ENCODE measurements at regions of chr19 and their contacts with region 1.

Region 1: DNA sequence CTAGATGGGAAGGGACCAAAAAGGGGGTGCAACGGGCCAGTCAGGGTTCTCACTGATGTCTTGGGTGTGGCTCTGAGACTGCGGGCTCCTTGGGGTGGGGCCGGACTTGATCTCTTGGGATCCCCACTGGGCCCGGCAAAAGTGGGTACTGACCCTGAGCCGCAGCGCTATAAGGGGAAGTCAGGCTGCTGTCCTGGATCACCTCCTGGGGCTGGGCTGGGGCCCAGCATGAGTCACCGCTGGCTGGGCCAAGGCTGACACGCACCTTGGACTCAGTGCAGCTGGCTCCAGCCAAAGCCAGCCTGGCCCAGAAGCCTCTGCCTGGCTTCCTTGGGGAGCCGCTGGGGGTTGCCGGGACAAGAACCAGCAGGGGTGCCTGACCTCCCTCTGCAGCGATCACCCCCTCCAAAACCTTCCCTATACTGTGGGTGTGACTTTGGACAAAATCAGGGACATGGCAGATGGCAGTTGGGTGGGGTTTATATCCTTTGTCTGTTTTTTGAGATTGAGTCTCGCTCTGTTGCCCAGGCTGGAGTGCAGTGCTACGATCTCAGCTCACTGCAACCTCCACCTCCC is 617 bp upstream of the IQCN start:
- DNase-seq: peak; percentile 92
- ATAC-seq: peak; percentile 85

Region 2: DNA sequence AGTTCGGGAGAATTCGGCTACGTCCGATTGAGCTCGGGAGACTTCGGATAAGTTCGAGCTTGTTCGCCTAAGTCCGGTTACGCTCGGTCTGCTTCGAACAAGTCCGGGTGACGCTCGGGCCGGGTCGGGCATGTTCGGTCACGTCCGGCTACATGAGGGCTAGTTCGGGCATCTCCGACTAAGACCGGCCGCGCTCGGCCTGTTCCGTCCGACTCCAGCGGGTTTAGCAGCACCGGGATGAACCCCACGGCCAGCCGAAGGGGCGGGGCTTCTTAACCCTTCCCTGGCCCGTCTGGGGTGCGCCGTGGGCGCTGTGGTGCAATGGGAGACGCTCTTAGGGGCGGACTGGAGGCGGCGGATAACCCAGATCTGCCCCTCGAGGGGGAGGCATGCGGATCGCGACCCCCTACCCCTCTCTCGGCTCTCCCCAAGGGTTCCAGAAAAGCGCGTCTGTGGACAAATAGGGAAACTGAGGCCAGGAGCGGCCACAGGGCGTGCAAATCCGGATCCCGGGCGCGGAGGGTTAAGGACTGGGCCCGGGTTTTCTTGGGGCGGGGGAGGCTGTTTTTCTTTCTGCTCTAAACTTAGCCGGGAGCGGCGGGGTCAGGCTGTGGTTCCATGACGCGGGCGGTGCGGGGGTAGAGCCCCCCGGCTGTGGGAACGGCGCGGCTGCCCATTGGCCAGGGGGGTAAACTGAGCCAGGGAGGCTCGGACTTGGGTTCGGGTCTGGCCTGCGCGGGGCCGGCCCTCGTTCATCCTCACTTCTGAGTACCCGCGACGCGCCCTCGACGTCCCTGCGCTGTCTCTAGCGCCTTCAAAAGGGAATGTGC is 50.1 kb before region 1 on chr19:
- intact Hi-C with region 1: no loop called
- DNase-seq: peak; percentile 98
- ATAC-seq: peak; percentile 98

Region 3: DNA sequence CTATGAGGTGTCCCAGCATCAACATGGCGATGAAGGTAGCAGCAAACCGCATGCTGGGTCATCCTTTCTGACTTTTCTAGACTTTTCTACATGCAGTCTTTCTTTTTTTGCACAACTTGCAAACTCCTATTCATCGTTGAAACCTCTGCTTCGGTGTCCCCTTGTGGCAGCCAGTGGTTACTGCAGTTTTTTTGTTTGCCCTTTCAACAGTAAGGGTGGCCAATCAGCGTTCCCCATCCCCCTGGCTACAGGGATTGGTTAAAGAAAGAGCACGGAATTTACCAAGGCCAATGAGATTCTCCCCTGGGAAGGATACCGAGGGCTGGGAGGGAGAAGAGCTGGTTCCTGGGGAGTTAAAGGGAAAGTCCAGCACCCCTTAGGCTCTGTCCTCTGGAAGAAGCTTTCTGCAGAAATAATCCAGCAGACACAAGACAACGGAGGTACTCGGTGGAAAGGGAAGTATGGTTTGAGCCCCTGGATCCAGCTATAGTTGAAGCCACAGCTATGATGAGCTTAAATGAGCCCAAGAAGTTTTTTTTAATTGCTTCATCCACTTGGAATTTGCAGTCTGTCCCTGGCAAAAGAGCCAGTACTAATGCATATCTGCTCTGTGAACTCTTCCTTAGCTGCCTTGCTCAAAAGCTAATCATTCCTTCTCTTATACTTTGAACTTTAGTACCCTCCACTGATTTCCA is 53.6 kb after region 1 on chr19:
- intact Hi-C with region 1: loop called (anchors 1 kb)
- DNase-seq: peak; percentile 88
- ATAC-seq: peak; percentile 98

Region 4: DNA sequence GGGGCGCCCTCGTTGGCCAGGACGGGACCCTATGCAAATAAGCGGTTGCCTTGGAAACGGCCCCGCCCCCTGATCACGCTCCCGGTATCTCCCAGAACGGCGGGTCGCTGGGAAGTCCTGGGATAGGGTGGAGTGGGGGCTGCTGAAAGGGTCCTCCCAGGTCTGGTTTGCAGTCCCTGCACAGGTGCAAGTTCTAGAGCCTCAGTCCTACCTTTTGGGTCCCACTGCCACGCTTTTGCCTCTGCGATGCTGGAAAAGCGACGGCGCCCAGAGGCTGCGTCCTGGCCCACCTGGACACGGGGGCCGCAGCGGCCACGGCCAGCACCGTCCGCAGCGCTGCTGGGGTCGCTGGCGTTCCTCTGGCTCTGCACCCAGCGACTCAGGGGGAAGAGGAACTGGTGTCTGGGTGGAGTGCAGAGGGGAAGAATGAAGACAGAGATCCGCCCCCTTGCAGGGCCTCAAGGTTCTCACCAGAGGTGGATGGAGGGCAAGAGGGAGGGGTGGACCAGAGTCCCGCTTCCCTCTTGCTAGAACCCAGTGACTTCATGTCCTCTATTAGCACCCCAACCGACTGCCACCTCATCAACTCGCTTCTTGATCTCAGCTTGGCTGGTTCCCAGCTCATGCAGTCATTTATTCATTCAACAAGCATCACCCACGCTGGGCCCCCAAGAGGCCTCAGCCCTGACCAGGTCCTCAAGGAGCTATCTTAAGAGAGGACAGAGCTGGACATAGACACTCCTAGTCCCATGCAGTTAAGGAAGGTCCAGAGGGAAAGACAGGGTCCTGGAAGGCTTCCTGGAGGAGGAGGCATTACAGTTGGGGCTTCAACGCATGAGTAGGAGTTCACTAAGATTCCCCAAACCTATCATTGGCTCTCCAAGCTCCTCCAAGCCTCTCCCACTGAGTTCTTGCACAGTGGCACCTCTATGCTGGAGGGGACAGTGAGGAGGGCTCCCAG is 122.7 kb after region 1 on chr19 and contains the start of gene LRRC25:
- intact Hi-C with region 1: loop called (anchors 5 kb)
- DNase-seq: peak; percentile 86
- ATAC-seq: peak; percentile 59
- total RNA-seq, gene LRRC25: 5.0 TPM

Measured in Right ventricle myocardium inferior (tissue), 1 donor.